AG04449 (cell line): ENCODE measurements at regions of chr2 and their contacts with region 1.

Region 1: DNA sequence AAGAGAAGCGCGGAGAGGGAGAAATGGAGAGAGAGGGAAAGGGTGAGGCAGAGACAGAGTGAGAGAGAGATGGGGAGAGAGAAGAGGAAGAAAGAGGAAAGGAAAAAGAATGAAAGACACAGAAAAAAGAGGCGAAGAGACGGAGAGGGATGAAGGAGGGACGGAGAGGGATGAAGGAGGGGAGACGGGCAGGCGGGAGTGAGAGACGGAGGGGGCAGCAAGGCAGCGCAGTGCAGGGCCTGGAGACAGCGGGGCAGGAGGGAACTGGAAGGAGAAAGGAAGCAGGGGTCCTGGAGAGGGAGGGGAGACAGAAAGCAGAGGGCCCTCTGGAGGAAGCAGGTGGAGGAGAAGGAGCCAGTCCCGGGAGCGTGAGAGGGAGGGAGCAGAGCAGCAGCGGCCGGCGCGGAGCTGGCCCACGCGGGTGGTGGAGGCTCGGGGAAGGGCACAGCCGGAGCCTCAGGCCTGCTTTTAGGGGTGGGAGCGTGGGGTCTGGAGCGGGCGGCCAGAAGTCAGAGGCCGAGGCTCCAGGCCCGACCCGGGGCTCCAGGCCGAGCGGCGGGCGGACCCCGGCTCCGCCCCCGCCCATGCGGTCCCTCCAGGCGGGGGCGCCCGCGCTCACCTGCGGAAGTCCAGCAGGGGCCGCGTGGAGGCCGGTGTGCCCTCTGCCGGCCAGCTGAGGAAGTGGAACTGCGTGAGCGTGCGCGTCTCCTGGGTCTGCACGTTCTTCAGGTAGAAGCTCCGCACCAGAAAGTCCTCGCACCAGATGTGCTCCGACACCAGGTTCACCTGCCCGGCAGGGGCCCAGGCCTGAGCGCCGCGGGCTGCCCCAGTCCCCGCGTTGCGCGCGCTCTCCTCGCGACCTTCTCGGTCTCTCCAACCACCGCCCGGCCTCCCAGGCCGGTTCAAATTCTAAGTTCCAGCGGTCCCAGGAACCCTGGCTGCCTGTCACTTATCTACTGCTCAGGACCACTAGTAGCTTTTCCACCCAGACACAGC is 14.5 kb downstream of the PTPRN start:
- DNase-seq: no peak
- H3K4me3 ChIP-seq: peak overlapping the region; percentile 59
- CTCF ChIP-seq: peak; percentile 96

Region 2: DNA sequence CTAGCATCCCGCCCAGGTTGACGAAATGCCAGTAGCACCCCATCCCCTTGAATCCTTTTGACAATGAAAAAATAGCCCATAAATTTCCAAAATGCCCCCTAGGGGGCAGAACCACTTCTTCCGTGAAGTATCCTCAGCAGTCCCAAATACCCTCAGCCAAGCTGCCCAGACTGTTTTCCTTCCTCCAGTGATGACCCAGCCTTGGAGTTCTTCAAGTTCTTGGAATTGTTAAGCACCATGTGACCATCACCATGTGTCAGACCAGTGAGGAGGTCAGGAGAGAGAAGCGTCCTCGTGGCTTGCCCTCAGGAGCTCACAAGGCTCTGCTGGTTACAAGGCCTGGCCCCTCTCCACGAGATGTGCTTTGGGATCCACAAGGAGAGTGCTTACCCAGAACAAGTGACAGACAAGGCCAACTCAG is 123.4 kb before region 1 on chr2:
- CTCF ChIA-PET with region 1: interaction called, 154 read pairs
- POLR2A ChIA-PET with region 1: interaction called, 3 read pairs
- DNase-seq: peak; percentile 75
- H3K4me3 ChIP-seq: no peak overlapping the region
- CTCF ChIP-seq: peak; percentile 27

Region 3: GRCh38 chr2:219223831-219224610 is 70.6 kb before region 1 on chr2:
- CTCF ChIA-PET with region 1: interaction called, 81 read pairs
- POLR2A ChIA-PET with region 1: interaction called, 3 read pairs
- DNase-seq: no peak
- H3K4me3 ChIP-seq: no peak overlapping the region
- CTCF ChIP-seq: no peak

Region 4: DNA sequence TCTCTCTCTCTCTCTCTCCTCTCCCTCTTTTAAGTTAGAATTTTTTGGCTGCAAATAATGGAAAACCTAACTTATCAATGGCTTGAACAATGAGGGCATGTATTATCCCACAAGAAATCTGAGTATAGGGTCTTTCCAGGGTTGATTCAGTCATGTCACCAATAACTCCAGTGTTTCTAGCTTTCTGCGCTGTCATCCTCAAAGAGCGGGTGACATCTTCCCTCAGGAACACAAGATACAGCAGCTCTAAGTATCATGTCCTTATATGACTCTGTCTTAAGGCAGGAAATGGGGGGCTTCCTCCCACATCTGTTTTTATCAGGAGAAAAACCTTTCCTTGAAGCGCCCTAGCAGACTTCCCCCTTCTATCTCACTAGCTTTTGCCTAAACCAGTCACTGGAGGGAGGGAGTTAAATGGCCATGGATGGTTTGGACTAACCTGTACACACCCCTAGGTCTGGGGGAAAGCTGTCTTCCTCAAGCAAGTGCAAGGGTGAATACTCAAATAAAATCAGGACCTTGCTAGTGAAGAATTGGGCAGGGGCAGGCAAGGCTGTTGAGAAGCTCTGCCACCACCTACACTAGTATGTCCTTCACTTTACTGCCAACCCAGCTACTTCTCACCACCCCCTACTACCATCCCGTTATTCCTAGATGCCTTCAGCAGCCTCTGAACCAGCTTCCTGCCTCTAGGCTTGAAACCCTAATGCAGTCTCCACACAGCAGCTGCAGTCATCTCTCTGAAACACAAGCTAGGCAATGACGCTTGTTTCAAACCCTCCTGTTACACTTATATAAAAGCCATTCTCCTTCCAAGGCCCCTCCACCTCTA is 33.4 kb before region 1 on chr2:
- CTCF ChIA-PET with region 1: interaction called, 11 read pairs
- POLR2A ChIA-PET with region 1: no interaction called
- DNase-seq: no peak
- H3K4me3 ChIP-seq: no peak overlapping the region
- CTCF ChIP-seq: no peak

Region 5: DNA sequence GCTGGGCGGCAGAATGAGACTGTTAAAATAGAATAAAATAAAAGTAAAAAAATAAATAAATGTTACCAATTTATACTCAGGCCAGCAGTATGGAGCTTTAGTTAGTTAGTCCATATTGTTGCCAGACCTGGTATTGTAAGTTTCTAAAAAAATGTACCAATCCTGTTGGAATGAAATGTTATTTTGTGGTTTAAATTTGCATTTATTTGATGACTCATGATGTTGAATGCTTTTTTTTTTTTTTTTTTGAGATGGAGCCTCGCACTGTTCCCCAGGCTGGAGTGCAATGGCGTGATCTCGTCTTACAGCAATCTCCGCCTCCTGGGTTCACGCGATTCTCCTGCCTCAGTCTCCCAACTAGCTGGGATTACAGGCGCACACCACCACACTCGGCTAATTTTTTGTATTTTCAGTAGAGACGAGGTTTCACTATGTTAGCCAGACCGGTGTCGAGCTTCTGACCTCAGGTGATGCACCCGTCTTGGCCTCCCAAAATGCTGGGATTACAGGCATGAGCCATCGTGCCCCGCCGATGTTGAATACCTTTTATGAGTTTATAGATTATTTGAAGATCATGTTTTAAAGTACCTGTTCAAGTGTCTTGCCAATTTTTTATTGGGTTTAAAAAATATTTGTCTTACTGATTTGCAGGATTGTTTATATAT is 20.3 kb after region 1 on chr2:
- CTCF ChIA-PET with region 1: interaction called, 145 read pairs
- POLR2A ChIA-PET with region 1: no interaction called
- DNase-seq: no peak
- H3K4me3 ChIP-seq: no peak overlapping the region
- CTCF ChIP-seq: no peak

Region 6: GRCh38 chr2:219362524-219363164 is 68.0 kb after region 1 on chr2:
- CTCF ChIA-PET with region 1: interaction called, 11 read pairs
- POLR2A ChIA-PET with region 1: no interaction called
- DNase-seq: peak; percentile 91
- H3K4me3 ChIP-seq: no peak overlapping the region
- CTCF ChIP-seq: no peak